PC-3 (cell line): ENCODE measurements at regions of chr1 and their contacts with region 1.

Region 1: DNA sequence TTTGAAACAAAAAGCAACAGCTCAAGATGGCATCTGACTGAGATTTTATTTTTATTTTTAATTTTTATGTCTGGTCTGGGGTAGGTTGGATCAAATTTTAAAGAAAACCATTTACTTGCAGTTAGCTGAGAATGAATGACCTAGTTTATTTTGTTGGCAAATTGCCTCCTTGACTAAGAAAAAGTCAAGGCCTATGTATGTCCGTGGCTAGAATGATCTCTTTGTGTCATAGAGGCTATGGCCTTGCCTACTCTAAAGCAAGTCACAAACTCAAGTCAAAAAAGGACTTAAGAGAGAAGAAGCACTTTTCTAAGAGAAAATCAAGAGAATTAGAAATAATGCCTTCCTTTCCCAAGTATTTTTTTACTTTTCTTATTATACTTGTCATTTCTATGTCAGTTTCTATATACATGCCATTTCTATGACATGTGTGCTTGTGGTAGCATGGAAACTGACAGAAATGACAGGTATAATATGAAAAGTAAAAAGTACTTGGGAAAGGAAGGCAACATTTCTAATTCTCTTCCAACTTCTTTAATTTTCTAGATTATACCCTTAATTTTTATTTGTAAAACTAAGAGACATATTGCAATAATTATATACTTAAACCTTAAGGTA is 136.7 kb downstream of the CENPF start:
- DNase-seq: no peak
- ATAC-seq: no peak; the same call in 1 of the 2 replicates
- H3K4me3 ChIP-seq: no peak overlapping the region
- H3K27ac ChIP-seq: no peak overlapping the region
- H3K4me1 ChIP-seq: peaks cover 9% of the 10 kb centered on the region; the same call in 1 of the 2 replicates
- H3K27me3 ChIP-seq: no peaks in the 10 kb centered on the region
- CTCF ChIP-seq: no peak

Region 2: GRCh38 chr1:214718724-214719123 is 21.0 kb before region 1 on chr1:
- CTCF ChIA-PET with region 1: no interaction called
- POLR2A ChIA-PET with region 1: interaction called, 3 read pairs
- intact Hi-C with region 1: loop called (anchors 1 kb)
- DNase-seq: peak; percentile 97
- ATAC-seq: peak; percentile 91
- H3K4me3 ChIP-seq: no peak overlapping the region
- H3K27ac ChIP-seq: no peak overlapping the region
- H3K4me1 ChIP-seq: peaks cover 25% of the 10 kb centered on the region
- H3K27me3 ChIP-seq: no peaks in the 10 kb centered on the region
- CTCF ChIP-seq: no peak